ENCODE measurements at regions of chr16 and their contacts with region 1.

Region 1: GRCh38 chr16:55465077-55465896 is 13.7 kb upstream of the MMP2 start:
- DNase-seq: no peak
- H3K4me3 ChIP-seq: no peak overlapping the region
- H3K27me3 ChIP-seq: no peaks in the 10 kb centered on the region; the same call in 1 of the 2 replicates
- CTCF ChIP-seq: peak; percentile 96

Region 2: GRCh38 chr16:55502801-55503366 is 37.6 kb after region 1 on chr16:
- CTCF ChIA-PET with region 1: interaction called, 30 read pairs
- POLR2A ChIA-PET with region 1: no interaction called
- DNase-seq: no peak
- H3K4me3 ChIP-seq: no peak overlapping the region
- H3K27me3 ChIP-seq: no peaks in the 10 kb centered on the region
- CTCF ChIP-seq: 0 out of 2 replicates have a peak, but pooled peaks have one; percentile 19

Region 3: GRCh38 chr16:55543472-55543871 is 78.2 kb after region 1 on chr16:
- CTCF ChIA-PET with region 1: interaction called, 123 read pairs
- POLR2A ChIA-PET with region 1: no interaction called
- DNase-seq: no peak
- H3K4me3 ChIP-seq: no peak overlapping the region
- H3K27me3 ChIP-seq: no peaks in the 10 kb centered on the region
- CTCF ChIP-seq: peak; percentile 29; the same call in 1 of the 2 replicates

Region 4: DNA sequence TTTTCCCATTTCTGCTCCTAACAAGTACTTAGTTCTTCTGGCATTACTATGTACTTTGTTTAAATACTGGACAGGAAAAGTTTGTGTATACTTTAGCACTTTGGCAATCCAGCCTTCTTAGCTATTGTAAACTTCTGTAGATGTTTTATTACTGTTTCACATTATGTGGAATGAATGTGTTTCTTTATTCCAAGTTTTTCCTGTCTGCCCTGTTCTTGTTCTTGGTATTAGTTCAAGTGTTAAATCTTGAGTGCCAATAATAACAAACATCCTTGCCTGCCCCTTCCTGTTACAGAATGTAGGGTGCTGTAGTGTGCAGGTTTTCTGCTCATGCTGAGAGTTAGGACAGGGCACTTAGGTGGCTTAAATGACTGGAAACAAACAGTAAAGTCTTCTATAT is 93.9 kb after region 1 on chr16:
- CTCF ChIA-PET with region 1: interaction called, 13 read pairs
- POLR2A ChIA-PET with region 1: no interaction called
- DNase-seq: no peak
- H3K4me3 ChIP-seq: no peak overlapping the region
- H3K27me3 ChIP-seq: no peaks in the 10 kb centered on the region
- CTCF ChIP-seq: no peak

Region 5: DNA sequence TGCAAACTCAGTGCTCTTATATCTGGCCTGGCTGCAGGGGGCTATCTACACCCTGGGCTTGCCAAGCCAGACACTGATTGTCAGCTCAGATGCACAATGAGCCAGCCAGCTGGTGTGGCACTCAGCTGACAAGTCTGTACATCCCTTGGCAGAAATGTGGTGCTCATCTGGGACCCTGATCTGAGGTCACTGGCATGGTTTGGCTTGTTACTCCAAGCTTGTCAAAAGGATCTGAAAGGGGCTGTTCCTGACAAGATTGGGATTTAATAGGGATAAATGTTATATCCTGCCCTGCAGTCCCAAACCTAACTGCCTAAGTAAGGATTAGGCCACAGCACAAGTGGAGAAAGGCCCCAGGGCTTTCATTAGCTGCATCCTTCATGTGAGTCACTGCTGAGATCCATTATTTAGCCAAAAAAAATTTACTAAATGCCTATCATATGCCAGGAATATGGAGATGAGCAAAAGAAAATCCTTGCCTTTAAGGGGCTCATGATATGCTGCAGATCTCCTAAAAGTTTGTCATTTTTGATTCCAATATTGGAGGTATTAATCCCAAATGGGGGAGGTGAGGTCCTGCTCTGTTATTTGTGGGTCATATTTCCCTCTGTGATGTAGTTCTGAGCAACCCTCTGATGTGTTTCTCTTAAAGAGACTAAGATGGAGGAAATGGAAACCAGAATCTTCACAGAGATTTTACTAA is 196.8 kb after region 1 on chr16:
- CTCF ChIA-PET with region 1: interaction called, 16 read pairs
- POLR2A ChIA-PET with region 1: no interaction called
- DNase-seq: peak; percentile 31
- H3K4me3 ChIP-seq: no peak overlapping the region
- H3K27me3 ChIP-seq: peaks cover 4% of the 10 kb centered on the region
- CTCF ChIP-seq: no peak

Region 6: GRCh38 chr16:55842369-55843104 is 377.2 kb after region 1 on chr16:
- CTCF ChIA-PET with region 1: interaction called, 17 read pairs
- POLR2A ChIA-PET with region 1: no interaction called
- DNase-seq: no peak
- H3K4me3 ChIP-seq: no peak overlapping the region
- H3K27me3 ChIP-seq: peaks cover 3% of the 10 kb centered on the region
- CTCF ChIP-seq: peak; percentile 63

Measured in BJ (cell line).